Activated CD8-positive, alpha-beta memory T cell treated with anti-CD3 and anti-CD28 coated beads, Interleukin-2, amount 10 ng/mL, durations not matched to agents 7 days and 5 days (primary cell): ENCODE measurements at regions of chr2 and their contacts with region 1.

Region 1: GRCh38 chr2:26852405-26853306 is 4.7 kb downstream of the DPYSL5 start:
- DNase-seq: no peak
- ATAC-seq: no peak
- H3K4me3 Mint-ChIP-seq: no peak overlapping the region
- H3K27ac Mint-ChIP-seq: no peak overlapping the region
- H3K4me1 Mint-ChIP-seq: peaks cover 7% of the 10 kb centered on the region
- H3K27me3 Mint-ChIP-seq: peaks cover 60% of the 10 kb centered on the region

Region 2: DNA sequence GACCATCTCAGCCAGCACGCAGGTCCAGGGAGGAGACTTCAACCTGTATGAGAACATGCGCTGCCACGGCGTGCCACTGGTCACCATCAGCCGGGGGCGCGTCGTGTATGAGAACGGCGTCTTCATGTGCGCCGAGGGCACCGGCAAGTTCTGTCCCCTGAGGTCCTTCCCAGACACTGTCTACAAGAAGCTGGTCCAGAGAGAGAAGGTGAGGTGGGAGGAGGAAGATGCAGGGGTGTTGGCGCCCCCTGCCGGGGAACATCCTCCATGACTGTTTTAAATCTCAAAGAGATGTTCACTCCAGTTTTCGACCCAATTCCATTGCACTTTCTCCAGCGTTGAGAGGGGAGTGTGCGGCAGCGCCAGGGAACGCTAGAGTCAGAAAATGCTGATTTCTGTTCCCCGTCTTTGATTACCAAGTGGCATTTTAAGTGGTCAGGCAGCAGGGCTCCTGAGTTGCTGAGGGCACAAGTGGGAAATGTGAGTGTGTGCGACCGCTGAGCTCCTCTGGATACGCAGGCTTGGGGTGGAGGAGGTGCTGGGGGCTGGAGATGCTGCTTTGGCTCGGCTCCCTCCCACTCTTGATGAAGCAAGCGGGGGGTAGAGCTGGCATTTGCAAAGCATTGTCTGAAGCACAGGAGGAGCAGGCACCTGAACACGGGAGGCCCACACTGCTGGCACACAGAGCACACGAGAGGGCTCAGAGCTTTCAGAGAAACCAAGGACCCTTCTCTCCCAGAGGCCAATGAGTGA is 90.1 kb after region 1 on chr2:
- CTCF ChIA-PET with region 1: interaction called, 82 read pairs
- DNase-seq: peak; percentile 72
- ATAC-seq: peak; percentile 42
- H3K4me3 Mint-ChIP-seq: no peak overlapping the region
- H3K27ac Mint-ChIP-seq: no peak overlapping the region
- H3K4me1 Mint-ChIP-seq: peaks cover 2% of the 10 kb centered on the region
- H3K27me3 Mint-ChIP-seq: peaks cover 8% of the 10 kb centered on the region